Head of caudate nucleus (tissue), 42 donors: ENCODE measurements at regions of chr4 and their contacts with region 1.

Region 1: DNA sequence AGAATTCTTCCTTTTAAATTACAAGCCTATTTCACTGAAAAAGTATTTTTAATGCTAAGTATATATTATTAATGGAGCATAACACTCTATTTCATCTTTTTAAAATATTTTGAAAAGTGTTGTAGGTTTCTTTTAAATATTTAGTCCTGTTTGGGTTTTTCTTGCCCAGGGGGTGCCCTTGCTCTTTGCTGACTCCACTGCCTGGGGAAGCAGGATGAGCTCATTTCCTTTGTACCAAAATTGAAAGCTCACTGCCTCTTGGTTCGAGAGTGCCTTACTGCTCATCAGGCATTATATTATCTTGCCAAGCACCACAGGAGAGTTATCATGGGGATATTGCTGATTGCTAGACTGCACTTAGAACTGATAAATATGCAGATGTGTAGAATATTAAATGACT is 819.2 kb downstream of the PCDH18 start:
- DNase-seq: peak in 31 of 42 donors; percentile 3 to 73 (median 41)

Region 2: GRCh38 chr4:136864580-136865185 is 151.5 kb after region 1 on chr4:
- intact Hi-C with region 1: loop called (anchors 5 kb)
- DNase-seq: peak in 23 of 42 donors; percentile 3 to 82 (median 57)